ENCODE measurements at regions of chr12 and their contacts with region 1.

Region 1: GRCh38 chr12:62919838-62920237 is 15.1 kb downstream of the PPM1H start:
- DNase-seq: peak in 7 of 10 donors; percentile 46 to 74 (median 68)
- H3K4me3 ChIP-seq: peak overlapping the region in 5 of 59 donors; percentile 4 to 23 (median 6)
- H3K27ac ChIP-seq: peak overlapping the region in 58 of 59 donors; percentile 48 to 97 (median 92)
- H3K27me3 ChIP-seq: no peaks in the 10 kb centered on the region
- CTCF ChIP-seq: no peak

Region 2: GRCh38 chr12:62862259-62862881 is 57.5 kb before region 1 on chr12:
- intact Hi-C with region 1: loop called in 1 of 2 experiments (anchors 5 kb)
- DNase-seq: no peak
- H3K4me3 ChIP-seq: no peak overlapping the region
- H3K27ac ChIP-seq: peak overlapping the region; percentile 6 to 93 (median 81)
- H3K27me3 ChIP-seq: no peaks in the 10 kb centered on the region
- CTCF ChIP-seq: no peak

Measured in dorsolateral prefrontal cortex (tissue), 120 donors.